Mammary epithelial cell (primary cell): ENCODE measurements at regions of chr5 and their contacts with region 1.

Region 1: DNA sequence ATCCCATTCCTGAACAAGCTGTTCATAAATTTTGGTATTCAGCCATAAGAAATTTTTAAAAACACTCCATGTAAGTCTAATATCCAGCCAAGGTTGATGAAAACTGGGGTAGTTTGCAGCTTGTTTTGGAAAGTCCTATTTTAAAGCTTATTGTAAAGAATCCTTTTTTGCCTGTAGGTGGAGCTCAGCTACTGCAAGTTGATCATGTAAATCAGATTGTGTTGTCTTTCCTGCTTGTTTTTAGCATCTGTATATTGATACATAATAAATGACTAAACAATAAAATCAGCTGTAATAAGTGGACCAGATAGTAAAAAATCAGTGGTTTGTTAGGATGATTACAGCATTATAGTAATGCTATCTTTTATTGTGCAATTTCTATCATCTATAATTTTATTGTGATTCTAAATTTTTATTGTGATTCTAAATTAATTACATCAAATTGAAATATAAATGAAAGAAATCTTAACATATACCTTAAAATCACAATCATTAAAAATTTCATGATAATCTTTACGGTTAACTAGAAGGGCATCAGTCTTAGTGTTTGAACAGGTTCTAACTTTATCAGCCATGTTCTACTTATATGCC is 42.4 kb downstream of the CWC27 start:
- DNase-seq: peak; percentile 38
- H3K4me3 ChIP-seq: no peak overlapping the region
- H3K27ac ChIP-seq: no peak overlapping the region
- H3K4me1 ChIP-seq: no peaks in the 10 kb centered on the region
- H3K27me3 ChIP-seq: no peaks in the 10 kb centered on the region
- CTCF ChIP-seq: peak; percentile 45 to 70

Region 2: GRCh38 chr5:64722588-64722987 is 88.6 kb before region 1 on chr5:
- CTCF ChIA-PET with region 1: no interaction called
- dilution Hi-C with region 1: no loop called
- in situ Hi-C with region 1: no loop called
- intact Hi-C with region 1: no loop called
- DNase-seq: no peak
- H3K4me3 ChIP-seq: no peak overlapping the region
- H3K27ac ChIP-seq: no peak overlapping the region
- H3K4me1 ChIP-seq: no peaks in the 10 kb centered on the region
- H3K27me3 ChIP-seq: no peaks in the 10 kb centered on the region
- CTCF ChIP-seq: no peak

Region 3: GRCh38 chr5:64759960-64760660 is 51.0 kb before region 1 on chr5:
- CTCF ChIA-PET with region 1: no interaction called
- dilution Hi-C with region 1: no loop called
- in situ Hi-C with region 1: no loop called
- intact Hi-C with region 1: no loop called
- DNase-seq: no peak
- H3K4me3 ChIP-seq: no peak overlapping the region
- H3K27ac ChIP-seq: no peak overlapping the region
- H3K4me1 ChIP-seq: peaks cover 6% of the 10 kb centered on the region
- H3K27me3 ChIP-seq: no peaks in the 10 kb centered on the region
- CTCF ChIP-seq: no peak

Region 4: DNA sequence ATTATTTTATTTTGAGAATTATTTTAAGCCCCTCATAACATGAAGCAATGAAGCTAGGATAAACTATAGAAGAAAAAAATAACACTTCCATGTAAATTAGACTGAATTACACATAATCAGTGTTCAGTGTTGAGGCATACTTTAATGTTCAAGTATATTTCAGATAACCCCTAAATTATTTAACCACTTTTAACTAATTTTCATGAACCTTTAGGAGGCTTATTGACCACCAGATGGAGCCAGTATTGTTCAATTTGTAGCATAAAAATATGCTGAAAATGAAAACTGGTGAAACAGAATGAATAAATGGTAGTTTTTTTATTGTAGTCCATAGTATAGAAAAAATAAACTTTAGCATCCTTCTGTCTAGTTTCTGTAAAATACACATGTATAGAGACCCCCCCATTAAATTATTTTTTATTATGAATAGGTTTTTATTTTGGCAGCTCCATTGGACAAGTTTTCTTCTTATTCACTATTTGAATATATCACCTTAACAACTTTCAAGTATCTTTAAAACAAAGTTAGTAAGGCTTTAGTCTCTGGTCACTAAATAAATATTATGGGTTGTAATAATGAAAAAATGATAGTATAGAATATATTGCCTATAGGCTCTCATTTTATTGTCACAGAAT is 147.7 kb after region 1 on chr5:
- CTCF ChIA-PET with region 1: no interaction called
- dilution Hi-C with region 1: no loop called
- in situ Hi-C with region 1: no loop called
- intact Hi-C with region 1: loop called (anchors 5 kb)
- DNase-seq: no peak
- H3K4me3 ChIP-seq: no peak overlapping the region
- H3K27ac ChIP-seq: no peak overlapping the region
- H3K4me1 ChIP-seq: no peaks in the 10 kb centered on the region
- H3K27me3 ChIP-seq: no peaks in the 10 kb centered on the region
- CTCF ChIP-seq: peak; percentile 45 to 51

Region 5: DNA sequence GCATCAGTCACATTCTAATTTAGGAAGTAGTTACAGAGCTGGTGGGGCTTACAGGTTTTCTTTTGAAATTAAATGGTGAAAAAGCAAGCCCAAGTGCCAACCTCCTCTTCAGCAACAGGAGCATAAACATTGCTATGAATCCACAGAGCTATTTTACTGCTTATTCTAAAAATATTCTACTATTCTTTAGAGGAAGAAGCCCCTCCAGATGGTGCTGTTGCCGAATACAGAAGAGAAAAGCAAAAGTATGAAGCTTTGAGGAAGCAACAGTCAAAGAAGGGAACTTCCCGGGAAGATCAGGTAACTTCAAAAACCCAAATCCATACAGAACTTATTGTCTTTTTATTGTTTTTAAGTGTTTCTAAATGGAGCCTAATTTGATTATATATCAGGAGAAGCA is 160.4 kb after region 1 on chr5:
- CTCF ChIA-PET with region 1: no interaction called
- dilution Hi-C with region 1: no loop called
- in situ Hi-C with region 1: no loop called
- intact Hi-C with region 1: no loop called
- DNase-seq: no peak
- H3K4me3 ChIP-seq: no peak overlapping the region
- H3K27ac ChIP-seq: no peak overlapping the region
- H3K4me1 ChIP-seq: no peaks in the 10 kb centered on the region
- H3K27me3 ChIP-seq: no peaks in the 10 kb centered on the region
- CTCF ChIP-seq: no peak

Region 6: GRCh38 chr5:65066385-65067146 is 255.4 kb after region 1 on chr5:
- CTCF ChIA-PET with region 1: no interaction called
- dilution Hi-C with region 1: no loop called
- in situ Hi-C with region 1: no loop called
- intact Hi-C with region 1: no loop called
- DNase-seq: peak; percentile 25
- H3K4me3 ChIP-seq: no peak overlapping the region
- H3K27ac ChIP-seq: no peak overlapping the region
- H3K4me1 ChIP-seq: peaks cover 23% of the 10 kb centered on the region
- H3K27me3 ChIP-seq: no peaks in the 10 kb centered on the region
- CTCF ChIP-seq: no peak

Region 7: DNA sequence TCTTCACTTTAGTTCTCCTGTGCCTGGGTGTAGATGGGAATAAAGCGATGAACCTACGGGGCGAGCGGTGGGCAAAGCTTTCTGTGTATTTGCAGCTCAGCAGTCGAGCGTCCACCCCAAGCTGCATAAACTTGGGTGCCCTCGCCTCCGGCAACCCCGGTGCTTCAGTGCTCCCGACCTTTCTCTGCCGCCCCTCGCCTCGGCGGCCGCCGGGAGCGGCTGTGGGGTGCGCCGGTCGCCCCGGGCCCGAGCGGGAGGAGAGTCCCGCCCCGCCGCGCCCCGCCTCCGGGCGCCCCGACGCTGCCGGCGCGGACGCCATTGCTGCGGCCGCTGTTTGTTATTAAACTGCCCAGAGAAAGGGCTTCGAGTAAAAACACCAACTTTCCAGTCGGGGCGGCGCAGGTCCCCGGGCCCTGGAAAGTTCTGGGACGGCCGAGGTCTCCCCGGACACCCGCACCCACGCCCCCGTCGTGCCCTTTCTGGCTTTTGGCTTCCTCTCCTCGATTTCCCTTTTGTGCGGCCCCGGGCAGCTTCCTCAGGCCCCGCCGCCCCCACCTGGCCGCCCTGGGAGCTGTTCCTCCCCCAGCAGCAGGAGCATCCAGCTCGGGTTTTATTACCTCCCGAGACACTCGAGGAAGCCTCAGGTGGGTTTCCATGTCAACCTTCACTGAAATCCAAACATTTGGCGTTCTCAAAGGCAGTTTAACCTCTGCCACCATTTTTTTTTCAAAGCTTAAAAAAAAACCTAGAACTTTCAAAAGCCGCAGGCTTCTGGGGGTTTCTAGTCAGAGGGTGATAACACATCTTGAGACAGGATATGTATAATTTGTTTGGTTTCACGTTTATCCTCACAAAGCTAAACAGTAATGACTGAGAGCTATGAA is 291.9 kb after region 1 on chr5:
- CTCF ChIA-PET with region 1: no interaction called
- dilution Hi-C with region 1: no loop called
- in situ Hi-C with region 1: no loop called
- intact Hi-C with region 1: loop called (anchors 10 kb)
- DNase-seq: no peak
- H3K4me3 ChIP-seq: peak overlapping the region in 2 of 3 experiments; percentile 21 to 39
- H3K27ac ChIP-seq: no peak overlapping the region
- H3K4me1 ChIP-seq: peaks cover 14% of the 10 kb centered on the region
- H3K27me3 ChIP-seq: no peaks in the 10 kb centered on the region
- CTCF ChIP-seq: peak in 1 of 2 donors; percentile 3

Region 8: DNA sequence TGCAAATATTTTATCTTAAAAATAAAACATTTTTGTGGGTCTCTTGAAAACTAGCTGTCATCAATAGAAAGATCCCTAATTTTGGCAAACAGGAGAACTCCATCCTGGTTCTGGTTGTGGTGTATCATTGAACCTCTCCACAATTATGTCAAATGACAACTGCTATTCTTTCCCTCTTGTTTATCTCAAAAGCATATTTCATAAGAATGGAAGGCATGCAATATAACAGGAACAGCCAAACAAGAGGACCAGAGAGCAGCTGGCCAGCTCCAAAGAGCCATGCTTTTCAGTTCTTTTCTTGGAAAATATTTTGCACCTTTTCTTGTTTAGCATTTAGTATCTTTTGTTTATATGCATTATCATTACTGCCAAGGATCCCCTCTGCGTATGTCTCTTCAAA is 545.1 kb after region 1 on chr5:
- CTCF ChIA-PET with region 1: no interaction called
- dilution Hi-C with region 1: no loop called
- in situ Hi-C with region 1: no loop called
- intact Hi-C with region 1: loop called (anchors 5 kb)
- DNase-seq: no peak
- H3K4me3 ChIP-seq: no peak overlapping the region
- H3K27ac ChIP-seq: no peak overlapping the region
- H3K4me1 ChIP-seq: no peaks in the 10 kb centered on the region
- H3K27me3 ChIP-seq: no peaks in the 10 kb centered on the region
- CTCF ChIP-seq: no peak

Region 9: GRCh38 chr5:65562731-65563701 is 751.9 kb after region 1 on chr5 and contains the starts of genes CENPK and PPWD1:
- CTCF ChIA-PET with region 1: interaction called, 3 read pairs
- dilution Hi-C with region 1: no loop called
- in situ Hi-C with region 1: no loop called
- intact Hi-C with region 1: loop called (anchors 2 kb)
- DNase-seq: peak; percentile 95
- H3K4me3 ChIP-seq: peak within 1 kb of the TSS; percentile 60 to 98 (median 93)
- H3K27ac ChIP-seq: peak within 1 kb of the TSS; percentile 88
- H3K4me1 ChIP-seq: peaks cover 13% of the 10 kb centered on the region
- H3K27me3 ChIP-seq: no peaks in the 10 kb centered on the region
- CTCF ChIP-seq: no peak
- total RNA-seq, gene CENPK: 4.8 to 27.8 TPM
- total RNA-seq, gene PPWD1: 26.0 to 29.3 TPM